Prostate gland (tissue), 2 donors: ENCODE measurements at regions of chr17 and their contacts with region 1.

Region 1: GRCh38 chr17:77471984-77472461 is 331.3 kb downstream of the SEC14L1 start:
- DNase-seq: peak; percentile 78
- H3K4me3 ChIP-seq: no peak overlapping the region
- H3K27ac ChIP-seq: peak overlapping the region; percentile 74 to 77
- H3K4me1 ChIP-seq: peaks cover 22% of the 10 kb centered on the region
- H3K27me3 ChIP-seq: no peaks in the 10 kb centered on the region
- CTCF ChIP-seq: no peak
- POLR2A ChIP-seq: no peak

Region 2: GRCh38 chr17:77088455-77089123 is 383.4 kb before region 1 on chr17:
- intact Hi-C with region 1: no loop called
- DNase-seq: peak; percentile 85
- H3K4me3 ChIP-seq: peak overlapping the region; percentile 73 to 83
- H3K27ac ChIP-seq: peak overlapping the region; percentile 70 to 74
- H3K4me1 ChIP-seq: peaks cover 2% of the 10 kb centered on the region
- H3K27me3 ChIP-seq: no peaks in the 10 kb centered on the region
- CTCF ChIP-seq: peak in 3 of 4 experiments; percentile 58 to 77 (median 67)
- POLR2A ChIP-seq: peak; percentile 27

Region 3: DNA sequence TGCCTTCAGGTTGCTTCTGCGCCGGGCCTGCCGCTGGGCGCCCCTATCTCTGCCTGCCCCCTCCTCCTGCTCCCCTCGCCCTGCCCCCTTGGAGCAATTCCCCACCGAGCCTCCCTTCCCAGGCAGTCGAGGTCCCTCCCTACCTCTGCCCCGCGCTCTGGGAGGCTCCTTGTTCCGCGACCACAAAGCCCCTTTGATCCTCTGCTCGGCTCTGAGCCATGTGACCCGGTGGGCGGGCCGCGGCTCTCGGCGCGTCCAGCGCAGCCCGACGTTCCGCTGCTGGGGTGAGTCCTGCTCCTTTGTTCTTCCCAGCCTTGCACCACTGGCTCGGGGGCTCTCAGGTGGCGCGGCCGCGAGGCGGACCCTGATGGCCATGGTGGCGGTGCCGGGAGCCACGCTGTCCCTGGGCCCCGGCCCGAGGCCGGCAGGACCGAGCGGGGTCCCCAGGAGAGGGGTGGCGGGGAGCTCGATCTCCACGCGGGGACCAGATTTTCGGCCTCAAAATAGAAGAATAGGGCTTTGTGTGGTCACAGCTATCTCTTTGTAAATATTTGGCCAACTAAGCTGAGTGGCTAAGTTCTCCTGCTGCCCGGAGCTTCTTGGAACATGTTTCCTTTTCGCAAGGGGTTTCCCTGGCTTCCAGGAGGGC is 20.7 kb before region 1 on chr17:
- intact Hi-C with region 1: loop called (anchors 2 kb)
- DNase-seq: peak; percentile 66
- H3K4me3 ChIP-seq: peak overlapping the region; percentile 41 to 42
- H3K27ac ChIP-seq: peak overlapping the region; percentile 81 to 91
- H3K4me1 ChIP-seq: peaks cover 55% of the 10 kb centered on the region
- H3K27me3 ChIP-seq: no peaks in the 10 kb centered on the region
- CTCF ChIP-seq: no peak
- POLR2A ChIP-seq: peak; percentile 36

Region 4: GRCh38 chr17:77494664-77495435 is 22.8 kb after region 1 on chr17:
- intact Hi-C with region 1: loop called (anchors 1 kb)
- DNase-seq: peak; percentile 79
- H3K4me3 ChIP-seq: no peak overlapping the region
- H3K27ac ChIP-seq: no peak overlapping the region
- H3K4me1 ChIP-seq: peaks cover 3% of the 10 kb centered on the region
- H3K27me3 ChIP-seq: no peaks in the 10 kb centered on the region
- CTCF ChIP-seq: peak; percentile 99
- POLR2A ChIP-seq: no peak